Transverse colon (tissue), 4 donors: ENCODE measurements at regions of chr7 and their contacts with region 1.

Region 1: DNA sequence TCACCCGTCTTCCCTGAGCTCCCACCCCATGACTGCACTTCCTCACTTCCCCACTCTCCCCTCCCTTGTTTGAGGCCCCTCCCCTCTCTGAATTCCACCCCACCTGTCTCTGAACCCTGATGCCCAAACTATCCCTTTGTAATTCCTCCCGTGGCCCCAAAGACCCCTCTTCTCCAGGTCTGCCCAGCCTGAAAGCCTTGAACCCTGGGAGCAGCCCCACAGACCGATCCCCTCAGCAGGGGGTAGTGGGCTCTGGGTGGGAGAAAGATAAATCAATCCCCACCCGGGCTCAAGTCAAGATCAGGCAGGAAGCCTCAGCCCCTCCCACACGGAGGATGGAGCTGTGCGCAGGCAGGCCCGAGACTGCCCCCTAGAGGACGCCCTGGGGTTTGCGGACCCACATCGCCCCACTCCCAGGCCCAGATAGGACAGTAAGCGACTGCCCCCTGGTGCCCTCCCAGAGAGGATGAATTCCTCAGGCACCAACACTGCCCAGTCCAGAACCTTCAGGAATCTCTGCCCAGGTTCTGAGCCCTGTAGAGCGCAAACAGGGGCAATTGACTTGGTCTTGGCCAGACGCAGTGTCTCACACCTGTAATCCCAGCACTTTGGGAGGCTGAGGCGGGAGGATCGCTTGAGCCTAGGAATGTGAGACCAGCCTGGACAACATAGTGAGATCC is 11.7 kb downstream of the HSPB1 start:
- DNase-seq: peak; percentile 98
- H3K4me3 ChIP-seq: no peak overlapping the region
- H3K27ac ChIP-seq: no peak overlapping the region
- H3K4me1 ChIP-seq: peaks cover 7 to 32% (median 21%) of the 10 kb centered on the region in 4 donors
- H3K27me3 ChIP-seq: no peaks in the 10 kb centered on the region
- CTCF ChIP-seq: peak; percentile 100
- EP300 ChIP-seq: no peak
- POLR2A ChIP-seq: no peak

Region 2: GRCh38 chr7:76291343-76292212 is 22.6 kb before region 1 on chr7:
- in situ Hi-C with region 1: no loop called
- intact Hi-C with region 1: loop called (anchors 1 kb)
- DNase-seq: peak; percentile 92
- H3K4me3 ChIP-seq: peak overlapping the region in 3 of 4 donors; percentile 22 to 40 (median 24)
- H3K27ac ChIP-seq: peak overlapping the region; percentile 90 to 98 (median 92)
- H3K4me1 ChIP-seq: peaks cover 45 to 55% (median 51%) of the 10 kb centered on the region in 4 donors
- H3K27me3 ChIP-seq: no peaks in the 10 kb centered on the region
- CTCF ChIP-seq: peak; percentile 93 to 99 (median 98)
- EP300 ChIP-seq: no peak
- POLR2A ChIP-seq: peak; percentile 17

Region 3: DNA sequence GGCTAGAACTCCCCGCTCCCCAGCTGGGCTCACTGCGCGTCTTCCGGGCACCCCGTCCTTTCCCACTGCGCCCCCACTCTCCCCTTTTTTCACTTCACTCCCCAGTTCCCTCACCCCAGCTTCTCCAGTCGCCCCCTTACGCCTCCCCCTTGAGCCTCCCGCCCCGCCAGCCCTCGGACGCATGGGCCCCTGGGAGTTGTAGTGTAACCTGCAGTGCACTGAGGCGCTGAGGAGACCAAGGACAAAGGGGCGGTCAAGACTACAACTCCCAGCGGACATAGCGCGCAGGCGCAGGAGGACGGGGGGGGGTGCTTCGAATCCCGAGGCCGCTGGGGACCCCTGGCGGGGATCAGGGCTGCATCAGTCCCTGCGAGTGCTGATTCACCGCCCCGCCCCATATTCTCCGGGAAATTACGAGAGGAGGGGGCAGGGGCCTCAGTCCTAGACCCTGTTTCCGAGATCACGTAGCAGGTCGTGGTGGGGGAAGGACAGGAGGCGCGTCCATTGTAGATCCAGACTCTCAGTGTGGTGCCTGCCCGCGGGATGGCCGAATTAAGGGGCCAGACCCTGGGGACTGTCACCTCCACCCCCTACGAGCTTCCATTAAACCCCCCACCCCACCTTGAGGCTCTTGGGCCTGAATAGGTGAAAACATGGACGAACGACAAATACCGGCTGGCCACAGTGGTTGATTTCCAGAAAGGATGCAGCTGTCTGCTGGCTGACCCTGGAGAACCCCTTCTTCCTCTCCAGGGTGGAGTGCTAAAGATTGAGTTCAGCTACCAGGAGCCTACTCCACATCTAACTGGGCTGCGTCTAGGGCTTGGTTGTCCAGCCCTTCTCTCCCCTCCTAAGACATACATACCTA is 45.2 kb after region 1 on chr7:
- in situ Hi-C with region 1: no loop called
- intact Hi-C with region 1: loop called (anchors 5 kb)
- DNase-seq: peak; percentile 96
- H3K4me3 ChIP-seq: peak overlapping the region; percentile 83 to 99 (median 96)
- H3K27ac ChIP-seq: peak overlapping the region; percentile 99 to 100 (median 100)
- H3K4me1 ChIP-seq: peaks cover 10 to 44% (median 30%) of the 10 kb centered on the region in 4 donors
- H3K27me3 ChIP-seq: no peaks in the 10 kb centered on the region
- CTCF ChIP-seq: peak; percentile 59 to 96 (median 71)
- EP300 ChIP-seq: peak; percentile 66
- POLR2A ChIP-seq: no peak

Region 4: GRCh38 chr7:76383089-76383944 is 69.1 kb after region 1 on chr7:
- in situ Hi-C with region 1: no loop called
- intact Hi-C with region 1: no loop called
- DNase-seq: no peak
- H3K4me3 ChIP-seq: no peak overlapping the region
- H3K27ac ChIP-seq: no peak overlapping the region
- H3K4me1 ChIP-seq: peaks cover 4 to 16% (median 15%) of the 10 kb centered on the region in 4 donors
- H3K27me3 ChIP-seq: no peaks in the 10 kb centered on the region
- CTCF ChIP-seq: no peak
- EP300 ChIP-seq: no peak
- POLR2A ChIP-seq: no peak